Right ventricle myocardium inferior (tissue), 1 donor: ENCODE measurements at regions of chr6 and their contacts with region 1.

Region 1: GRCh38 chr6:73675466-73676098 is 20.4 kb upstream of the CD109 start:
- DNase-seq: peak; percentile 74
- ATAC-seq: peak; percentile 88

Region 2: DNA sequence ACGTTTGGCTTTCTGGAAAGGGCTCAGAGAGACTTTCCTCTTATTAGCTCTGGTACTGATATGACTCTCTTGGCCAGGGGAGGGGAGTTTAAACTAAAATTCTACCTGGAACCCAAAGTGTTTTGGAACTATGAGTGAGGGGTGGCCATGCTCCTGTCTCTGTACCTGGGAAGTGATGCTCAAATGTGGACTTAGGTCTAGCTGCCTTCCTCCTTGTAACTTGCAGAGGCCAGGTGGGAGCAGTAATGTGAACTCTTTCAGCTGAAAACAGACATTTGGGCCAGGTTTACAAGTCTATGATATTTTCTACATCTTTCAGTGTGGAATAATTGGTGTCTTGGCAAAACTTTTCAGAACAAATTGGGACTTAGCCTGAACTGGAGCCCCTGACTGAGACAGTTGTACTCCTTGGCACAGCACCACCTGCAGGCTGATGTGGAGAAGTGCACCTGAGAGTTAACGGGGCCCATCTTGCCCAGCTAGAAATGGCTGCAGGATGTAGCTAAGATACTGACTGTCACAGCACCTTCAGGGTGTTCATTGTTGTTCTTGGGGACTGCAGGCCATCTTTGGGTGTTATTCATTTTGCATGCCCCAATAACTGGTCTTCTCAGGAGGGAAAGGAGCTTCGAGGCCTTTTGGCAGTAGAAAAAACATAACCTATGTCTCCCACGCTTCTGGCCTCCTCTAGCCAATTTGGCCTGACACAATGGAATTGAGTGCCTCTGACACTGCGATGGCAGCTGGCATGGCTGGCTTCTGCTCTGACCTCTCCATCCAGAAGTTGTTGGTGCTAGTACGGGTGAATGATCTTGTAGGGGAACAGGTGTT is 57.5 kb after region 1 on chr6:
- intact Hi-C with region 1: loop called (anchors 1 kb)
- DNase-seq: peak; percentile 72
- ATAC-seq: peak; percentile 81